ENCODE measurements at regions of chr14 and their contacts with region 1.

Region 1: DNA sequence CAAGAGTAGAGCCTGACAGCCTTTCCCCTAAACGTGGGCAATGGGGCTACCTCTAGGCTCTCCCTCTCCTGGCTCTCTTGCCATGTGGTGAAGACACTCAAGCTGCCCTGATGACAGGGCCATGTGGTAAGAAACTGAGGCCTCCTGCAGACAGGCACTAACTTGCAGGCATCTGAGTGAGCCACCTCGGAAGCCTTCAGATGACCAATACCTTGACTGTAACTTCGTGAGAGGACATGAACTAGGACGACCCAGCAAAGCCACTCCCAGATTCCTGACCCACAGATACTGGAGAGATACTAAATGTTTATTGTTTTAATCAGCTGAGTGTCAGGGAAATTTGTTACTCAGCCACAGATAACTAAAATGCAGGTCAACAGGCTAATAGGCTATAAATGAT is 96.4 kb downstream of the EFCAB11 start:
- DNase-seq: no peak
- ATAC-seq: peak; percentile 11; the same call in 1 of the 2 replicates
- H3K4me3 ChIP-seq: no peak overlapping the region
- H3K27ac ChIP-seq: no peak overlapping the region
- H3K4me1 ChIP-seq: peaks cover 15% of the 10 kb centered on the region
- H3K27me3 ChIP-seq: no peaks in the 10 kb centered on the region
- CTCF ChIP-seq: no peak
- POLR2A ChIP-seq: no peak
- RAD21 ChIP-seq: no peak

Region 2: DNA sequence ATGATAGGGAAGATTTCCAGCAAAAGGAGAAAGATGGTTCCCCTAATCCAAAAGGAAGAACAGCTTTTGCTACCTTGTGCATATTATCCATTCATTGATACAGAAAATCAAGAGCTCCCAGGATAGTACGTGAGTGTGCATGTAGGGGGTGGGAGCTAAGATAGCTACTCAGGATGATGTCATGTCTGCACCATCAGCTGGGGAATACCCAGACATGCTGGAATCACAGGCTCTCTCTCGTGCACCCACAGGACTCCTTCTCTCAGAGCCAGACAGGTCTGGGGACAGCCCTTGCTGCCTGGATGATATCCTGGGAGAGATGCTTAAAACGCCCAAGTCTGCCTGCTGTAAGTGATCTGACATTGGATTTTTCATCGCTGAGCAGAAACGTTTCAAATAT is 480.0 kb before region 1 on chr14:
- CTCF ChIA-PET with region 1: no interaction called
- POLR2A ChIA-PET with region 1: no interaction called
- dilution Hi-C with region 1: no loop called
- in situ Hi-C with region 1: no loop called
- intact Hi-C with region 1: no loop called
- DNase-seq: peak; percentile 93
- ATAC-seq: peak; percentile 92
- H3K4me3 ChIP-seq: no peak overlapping the region
- H3K27ac ChIP-seq: no peak overlapping the region
- H3K4me1 ChIP-seq: peaks cover 6% of the 10 kb centered on the region
- H3K27me3 ChIP-seq: no peaks in the 10 kb centered on the region
- CTCF ChIP-seq: no peak
- POLR2A ChIP-seq: no peak
- RAD21 ChIP-seq: peak; percentile 13; the same call in 1 of the 2 replicates

Region 3: GRCh38 chr14:89805501-89805900 is 52.6 kb before region 1 on chr14:
- CTCF ChIA-PET with region 1: no interaction called
- POLR2A ChIA-PET with region 1: no interaction called
- dilution Hi-C with region 1: no loop called
- in situ Hi-C with region 1: no loop called
- intact Hi-C with region 1: no loop called
- DNase-seq: peak; percentile 62
- ATAC-seq: peak; percentile 89
- H3K4me3 ChIP-seq: no peak overlapping the region
- H3K27ac ChIP-seq: no peak overlapping the region
- H3K4me1 ChIP-seq: peaks cover 15% of the 10 kb centered on the region
- H3K27me3 ChIP-seq: no peaks in the 10 kb centered on the region
- CTCF ChIP-seq: no peak
- POLR2A ChIP-seq: no peak
- RAD21 ChIP-seq: no peak

Region 4: GRCh38 chr14:89823743-89824142 is 34.3 kb before region 1 on chr14:
- CTCF ChIA-PET with region 1: interaction called, 4 read pairs
- POLR2A ChIA-PET with region 1: no interaction called
- dilution Hi-C with region 1: no loop called
- in situ Hi-C with region 1: no loop called
- intact Hi-C with region 1: loop called (anchors 1 kb)
- DNase-seq: no peak
- ATAC-seq: no peak
- H3K4me3 ChIP-seq: no peak overlapping the region
- H3K27ac ChIP-seq: no peak overlapping the region
- H3K4me1 ChIP-seq: peaks cover 4% of the 10 kb centered on the region
- H3K27me3 ChIP-seq: no peaks in the 10 kb centered on the region
- CTCF ChIP-seq: no peak
- POLR2A ChIP-seq: no peak
- RAD21 ChIP-seq: no peak